ENCODE measurements at regions of chr22 and their contacts with region 1.

Region 1: DNA sequence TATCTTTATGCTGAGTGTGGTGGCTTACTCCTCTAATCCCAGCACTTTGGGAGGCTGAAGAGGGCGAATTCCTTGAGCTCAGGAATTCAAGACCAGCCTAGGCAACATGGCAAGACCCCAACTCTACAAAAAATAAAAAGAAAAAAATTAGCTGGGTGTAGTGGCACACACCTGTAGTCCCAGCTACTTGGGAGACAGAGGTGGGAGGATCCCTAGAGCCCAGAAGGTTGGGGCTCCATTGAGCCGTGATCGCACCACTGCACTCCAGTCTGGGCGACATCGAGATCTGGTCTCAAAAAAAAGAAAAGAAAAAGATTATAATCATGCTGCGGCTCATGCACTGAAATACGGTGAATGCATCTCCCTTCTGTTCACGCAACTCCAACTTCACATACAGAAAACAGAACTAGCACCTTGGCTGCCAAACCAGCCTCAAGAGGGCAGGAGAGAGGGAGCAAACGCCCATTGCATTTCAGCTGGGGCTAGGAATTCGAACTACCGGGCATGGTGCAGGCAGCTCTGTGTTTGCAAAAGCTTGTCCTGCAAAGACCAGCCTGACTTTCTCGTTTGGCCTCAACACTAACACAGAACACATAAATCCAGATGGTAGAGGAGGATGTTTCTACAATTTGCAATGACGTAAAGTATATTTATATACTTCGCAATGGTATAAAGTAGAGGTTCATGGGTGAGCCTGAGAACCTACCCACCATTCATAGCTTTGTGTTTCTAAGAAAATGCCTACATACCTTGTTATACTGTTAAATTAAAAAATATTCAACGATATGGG is 6.3 kb upstream of the SYNGR1 start:
- DNase-seq: peak; percentile 42
- H3K4me3 ChIP-seq: no peak overlapping the region
- H3K27ac ChIP-seq: no peak overlapping the region
- H3K4me1 ChIP-seq: no peaks in the 10 kb centered on the region
- H3K27me3 ChIP-seq: no peaks in the 10 kb centered on the region
- CTCF ChIP-seq: peak; percentile 86 to 87

Region 2: GRCh38 chr22:39392341-39392948 is 49.0 kb after region 1 on chr22:
- CTCF ChIA-PET with region 1: no interaction called
- dilution Hi-C with region 1: no loop called
- in situ Hi-C with region 1: no loop called
- intact Hi-C with region 1: loop called (anchors 5 kb)
- DNase-seq: no peak
- H3K4me3 ChIP-seq: no peak overlapping the region
- H3K27ac ChIP-seq: no peak overlapping the region
- H3K4me1 ChIP-seq: peaks cover 5% of the 10 kb centered on the region
- H3K27me3 ChIP-seq: no peaks in the 10 kb centered on the region
- CTCF ChIP-seq: no peak

Region 3: DNA sequence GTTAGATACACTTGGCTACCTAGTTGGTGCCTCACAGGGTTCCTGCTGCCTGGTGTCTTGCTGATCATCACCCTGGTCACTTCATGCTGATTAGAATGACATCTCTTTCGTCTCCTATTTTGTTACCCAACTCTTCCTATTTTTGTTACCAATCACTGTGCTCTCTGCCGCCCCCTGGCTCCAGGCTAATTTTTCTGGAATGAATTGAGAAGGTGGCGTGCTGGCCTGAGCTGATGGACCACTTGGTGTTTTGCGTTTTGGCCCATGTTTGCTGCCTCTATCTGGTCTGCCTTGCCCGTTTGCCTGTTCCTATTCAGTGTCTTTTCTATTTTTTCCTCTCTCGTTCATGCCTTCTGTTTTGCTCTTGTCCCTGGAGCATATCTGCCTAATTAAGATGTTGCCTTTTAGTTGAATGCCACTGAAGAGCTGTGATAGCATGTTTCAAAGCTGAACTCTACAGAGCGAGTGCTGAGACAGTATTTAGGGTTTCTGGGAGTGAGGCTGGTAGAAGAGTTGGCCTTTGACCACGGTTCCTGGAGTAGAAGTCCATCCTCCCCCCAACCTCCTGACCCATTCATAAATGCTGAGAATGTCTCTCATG is 171.0 kb after region 1 on chr22:
- CTCF ChIA-PET with region 1: interaction called, 3 read pairs
- dilution Hi-C with region 1: no loop called
- in situ Hi-C with region 1: no loop called
- intact Hi-C with region 1: loop called (anchors 1 kb)
- DNase-seq: no peak
- H3K4me3 ChIP-seq: no peak overlapping the region
- H3K27ac ChIP-seq: no peak overlapping the region
- H3K4me1 ChIP-seq: peaks cover 11% of the 10 kb centered on the region
- H3K27me3 ChIP-seq: no peaks in the 10 kb centered on the region
- CTCF ChIP-seq: peak; percentile 74 to 78